GM12878 (cell line): ENCODE measurements at regions of chr2 and their contacts with region 1.

Region 1: GRCh38 chr2:22253171-22253570 is 1129.4 kb downstream of the TDRD15 start:
- DNase-seq: no peak
- ATAC-seq: no peak
- H3K4me3 ChIP-seq: no peak overlapping the region
- H3K27ac ChIP-seq: no peak overlapping the region
- H3K4me1 ChIP-seq: no peaks in the 10 kb centered on the region
- H3K27me3 ChIP-seq: no peaks in the 10 kb centered on the region
- CTCF ChIP-seq: no peak
- EP300 ChIP-seq: no peak
- POLR2A ChIP-seq: no peak
- RAD21 ChIP-seq: no peak

Region 2: DNA sequence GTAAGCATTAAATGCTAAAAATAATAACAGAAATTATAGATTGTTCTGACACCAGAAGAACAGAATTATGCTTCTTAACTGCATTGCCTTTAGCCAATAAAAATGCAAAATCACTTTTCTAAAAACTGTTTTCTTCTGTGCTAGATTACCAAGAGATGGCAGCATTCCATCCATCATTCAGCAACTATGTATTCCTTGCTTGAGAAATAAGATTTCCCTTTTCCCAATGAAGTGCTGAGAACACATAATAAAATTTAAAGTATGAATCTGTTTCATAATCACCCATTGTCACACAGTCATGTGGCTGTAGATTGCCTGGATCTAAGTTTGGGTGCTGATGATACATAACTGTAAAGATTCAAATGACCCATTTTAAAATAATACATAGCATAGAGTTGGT is 625.2 kb before region 1 on chr2:
- CTCF ChIA-PET with region 1: no interaction called
- POLR2A ChIA-PET with region 1: no interaction called
- RAD21 ChIA-PET with region 1: no interaction called
- SMC1A ChIA-PET with region 1: no interaction called
- in situ Hi-C with region 1: no loop called
- intact Hi-C with region 1: no loop called
- DNase-seq: no peak
- ATAC-seq: no peak
- H3K4me3 ChIP-seq: no peak overlapping the region
- H3K27ac ChIP-seq: no peak overlapping the region
- H3K4me1 ChIP-seq: no peaks in the 10 kb centered on the region
- H3K27me3 ChIP-seq: no peaks in the 10 kb centered on the region
- CTCF ChIP-seq: no peak
- EP300 ChIP-seq: no peak
- POLR2A ChIP-seq: no peak
- RAD21 ChIP-seq: no peak

Region 3: GRCh38 chr2:22198381-22199283 is 54.5 kb before region 1 on chr2:
- CTCF ChIA-PET with region 1: no interaction called
- POLR2A ChIA-PET with region 1: no interaction called
- RAD21 ChIA-PET with region 1: no interaction called
- SMC1A ChIA-PET with region 1: no interaction called
- in situ Hi-C with region 1: no loop called
- intact Hi-C with region 1: no loop called
- DNase-seq: no peak
- ATAC-seq: no peak
- H3K4me3 ChIP-seq: no peak overlapping the region
- H3K27ac ChIP-seq: no peak overlapping the region
- H3K4me1 ChIP-seq: no peaks in the 10 kb centered on the region
- H3K27me3 ChIP-seq: no peaks in the 10 kb centered on the region
- CTCF ChIP-seq: no peak
- EP300 ChIP-seq: no peak
- POLR2A ChIP-seq: no peak
- RAD21 ChIP-seq: no peak

Region 4: DNA sequence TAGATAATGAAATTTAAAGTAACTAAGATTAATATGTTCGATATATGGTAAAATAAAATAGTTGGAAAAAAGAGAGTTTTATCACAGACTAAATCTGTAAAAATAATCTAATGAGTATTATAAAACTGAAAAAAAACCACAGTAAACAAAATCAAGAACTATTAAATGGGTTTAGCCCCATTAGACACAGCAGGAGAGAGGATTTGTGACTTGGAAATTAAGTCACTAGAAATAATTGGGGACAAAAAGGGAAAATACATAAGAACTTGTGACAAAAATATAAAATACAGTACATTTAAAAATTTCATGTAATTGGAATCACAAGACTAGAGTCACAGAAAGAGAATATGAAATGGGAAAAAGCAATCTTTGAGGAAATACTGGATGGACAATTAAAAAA is 17.2 kb after region 1 on chr2:
- CTCF ChIA-PET with region 1: no interaction called
- POLR2A ChIA-PET with region 1: no interaction called
- RAD21 ChIA-PET with region 1: no interaction called
- SMC1A ChIA-PET with region 1: no interaction called
- in situ Hi-C with region 1: no loop called
- intact Hi-C with region 1: no loop called
- DNase-seq: no peak
- ATAC-seq: no peak
- H3K4me3 ChIP-seq: no peak overlapping the region
- H3K27ac ChIP-seq: no peak overlapping the region
- H3K4me1 ChIP-seq: no peaks in the 10 kb centered on the region
- H3K27me3 ChIP-seq: no peaks in the 10 kb centered on the region
- CTCF ChIP-seq: no peak
- EP300 ChIP-seq: no peak
- POLR2A ChIP-seq: no peak
- RAD21 ChIP-seq: no peak

Region 5: DNA sequence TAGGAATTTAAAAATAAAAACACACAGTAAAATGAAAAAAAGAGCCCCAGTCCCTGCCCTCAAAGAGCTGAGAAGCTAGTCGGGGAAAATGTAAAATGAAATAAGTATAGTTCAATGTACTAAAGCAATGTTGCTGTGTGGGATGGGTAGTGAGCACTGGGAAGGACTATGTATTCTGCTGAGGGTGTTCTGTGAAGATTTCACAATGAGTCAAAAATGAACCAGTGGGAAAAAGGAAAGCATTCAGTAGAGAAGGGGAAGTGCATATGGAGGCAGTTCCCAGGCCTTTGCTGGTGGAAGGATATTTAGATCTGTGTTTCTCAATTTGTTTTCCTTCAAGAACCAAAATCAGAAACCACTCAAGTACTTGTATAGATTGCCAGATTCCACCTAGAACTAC is 37.1 kb after region 1 on chr2:
- CTCF ChIA-PET with region 1: no interaction called
- POLR2A ChIA-PET with region 1: no interaction called
- RAD21 ChIA-PET with region 1: no interaction called
- SMC1A ChIA-PET with region 1: no interaction called
- in situ Hi-C with region 1: no loop called
- intact Hi-C with region 1: loop called (anchors 2 kb)
- DNase-seq: no peak
- ATAC-seq: no peak
- H3K4me3 ChIP-seq: no peak overlapping the region
- H3K27ac ChIP-seq: no peak overlapping the region
- H3K4me1 ChIP-seq: no peaks in the 10 kb centered on the region
- H3K27me3 ChIP-seq: no peaks in the 10 kb centered on the region
- CTCF ChIP-seq: no peak
- EP300 ChIP-seq: no peak
- POLR2A ChIP-seq: no peak
- RAD21 ChIP-seq: no peak